Mucosa of descending colon (tissue), 3 donors: ENCODE measurements at regions of chr16 and their contacts with region 1.

Region 1: DNA sequence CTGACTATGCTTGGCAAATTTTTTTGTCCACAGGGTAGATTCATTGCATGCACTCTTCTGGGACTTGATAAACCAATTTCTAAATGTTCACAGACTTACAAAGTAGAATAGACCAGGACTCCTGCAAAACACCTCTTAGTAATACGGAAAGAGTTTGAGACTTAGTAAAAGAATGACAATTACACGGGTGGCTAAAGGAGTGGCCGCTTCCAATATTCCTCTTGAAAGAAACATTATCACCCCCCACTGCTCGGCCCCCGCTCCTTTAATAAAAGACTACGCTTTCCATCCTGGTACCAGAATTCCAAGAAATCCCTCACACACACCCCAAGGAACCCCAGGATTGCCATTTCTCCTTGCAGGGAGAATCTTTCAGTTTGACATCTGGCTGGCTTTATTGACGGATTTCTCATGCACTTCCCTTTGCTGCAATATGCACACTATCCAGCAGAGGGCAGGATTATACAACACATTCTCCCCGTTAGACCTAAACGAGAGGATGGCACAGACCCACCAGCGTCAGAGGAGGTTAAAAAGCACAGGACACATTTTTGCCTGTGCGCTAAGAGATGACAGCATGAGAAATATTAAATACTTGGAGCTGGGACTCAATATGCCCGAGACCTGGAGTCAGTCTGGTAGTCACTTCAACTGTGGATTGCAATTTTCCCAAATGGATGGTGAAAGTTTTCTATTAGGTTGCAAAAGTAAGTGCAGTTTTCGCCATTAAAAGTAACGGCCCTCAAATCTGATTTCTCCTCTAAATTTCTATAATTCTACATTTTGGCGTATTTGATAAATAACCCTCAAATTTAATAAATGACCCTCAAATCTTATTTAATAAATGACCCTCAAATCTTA is 46.6 kb upstream of the NUDT7 start:
- DNase-seq: peak in 2 of 3 donors; percentile 26 to 86
- ATAC-seq: peak; percentile 84
- H3K4me3 ChIP-seq: no peak overlapping the region
- H3K4me1 ChIP-seq: no peaks in the 10 kb centered on the region
- CTCF ChIP-seq: peak; percentile 68

Region 2: DNA sequence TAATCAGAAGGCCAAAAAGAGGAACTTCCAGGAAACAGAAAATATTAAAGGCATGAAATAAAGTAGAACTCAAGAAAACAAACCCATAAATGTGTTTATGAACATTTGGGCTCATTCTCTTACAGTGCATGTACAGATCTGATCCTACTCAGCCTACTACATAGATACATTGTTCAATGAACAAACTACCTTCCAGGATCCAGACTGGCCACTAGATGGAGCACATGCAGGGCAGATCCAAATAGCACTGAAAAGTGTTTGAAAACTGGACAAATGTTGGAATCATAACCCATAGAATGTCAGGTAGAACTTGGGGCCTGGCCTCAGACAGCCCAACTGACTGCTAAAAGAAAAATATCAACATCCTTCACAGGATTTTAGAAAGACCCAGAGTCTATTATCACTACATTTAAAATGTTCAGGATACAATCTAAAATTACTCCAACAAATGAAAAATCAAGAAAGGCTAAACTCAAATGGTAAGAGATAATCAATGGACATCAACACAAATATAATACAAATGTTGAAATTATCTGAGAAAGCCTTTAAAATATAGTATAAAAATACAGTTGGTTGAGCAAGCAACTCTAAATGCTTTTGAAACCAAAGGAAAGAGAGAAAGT is 75.8 kb before region 1 on chr16:
- intact Hi-C with region 1: no loop called
- DNase-seq: peak in 1 of 3 donors; percentile 60
- ATAC-seq: no peak
- H3K4me3 ChIP-seq: no peak overlapping the region
- H3K4me1 ChIP-seq: no peaks in the 10 kb centered on the region
- CTCF ChIP-seq: no peak

Region 3: GRCh38 chr16:77971306-77972271 is 295.9 kb after region 1 on chr16:
- intact Hi-C with region 1: loop called (anchors 2 to 5 kb)
- DNase-seq: peak; percentile 64 to 92 (median 86)
- ATAC-seq: peak; percentile 86
- H3K4me3 ChIP-seq: no peak overlapping the region
- H3K4me1 ChIP-seq: no peaks in the 10 kb centered on the region
- CTCF ChIP-seq: peak; percentile 41